PC-3 (cell line): ENCODE measurements at regions of chr7 and their contacts with region 1.

Region 1: GRCh38 chr7:100803398-100804233 is 23.7 kb downstream of the EPHB4 start:
- DNase-seq: peak; percentile 87
- ATAC-seq: peak; percentile 57
- H3K4me3 ChIP-seq: peak overlapping the region; percentile 34; the same call in 1 of the 2 replicates
- H3K27ac ChIP-seq: peak overlapping the region; percentile 96
- H3K4me1 ChIP-seq: peaks cover 46% of the 10 kb centered on the region
- H3K27me3 ChIP-seq: no peaks in the 10 kb centered on the region
- CTCF ChIP-seq: no peak

Region 2: GRCh38 chr7:100726996-100727761 is 76.4 kb before region 1 on chr7:
- CTCF ChIA-PET with region 1: interaction called, 5 read pairs
- POLR2A ChIA-PET with region 1: no interaction called
- intact Hi-C with region 1: loop called (anchors 2 kb)
- DNase-seq: peak; percentile 41
- ATAC-seq: 0 out of 2 replicates have a peak, but pooled peaks have one; percentile 14
- H3K4me3 ChIP-seq: no peak overlapping the region
- H3K27ac ChIP-seq: no peak overlapping the region
- H3K4me1 ChIP-seq: peaks cover 13% of the 10 kb centered on the region
- H3K27me3 ChIP-seq: no peaks in the 10 kb centered on the region
- CTCF ChIP-seq: no peak

Region 3: DNA sequence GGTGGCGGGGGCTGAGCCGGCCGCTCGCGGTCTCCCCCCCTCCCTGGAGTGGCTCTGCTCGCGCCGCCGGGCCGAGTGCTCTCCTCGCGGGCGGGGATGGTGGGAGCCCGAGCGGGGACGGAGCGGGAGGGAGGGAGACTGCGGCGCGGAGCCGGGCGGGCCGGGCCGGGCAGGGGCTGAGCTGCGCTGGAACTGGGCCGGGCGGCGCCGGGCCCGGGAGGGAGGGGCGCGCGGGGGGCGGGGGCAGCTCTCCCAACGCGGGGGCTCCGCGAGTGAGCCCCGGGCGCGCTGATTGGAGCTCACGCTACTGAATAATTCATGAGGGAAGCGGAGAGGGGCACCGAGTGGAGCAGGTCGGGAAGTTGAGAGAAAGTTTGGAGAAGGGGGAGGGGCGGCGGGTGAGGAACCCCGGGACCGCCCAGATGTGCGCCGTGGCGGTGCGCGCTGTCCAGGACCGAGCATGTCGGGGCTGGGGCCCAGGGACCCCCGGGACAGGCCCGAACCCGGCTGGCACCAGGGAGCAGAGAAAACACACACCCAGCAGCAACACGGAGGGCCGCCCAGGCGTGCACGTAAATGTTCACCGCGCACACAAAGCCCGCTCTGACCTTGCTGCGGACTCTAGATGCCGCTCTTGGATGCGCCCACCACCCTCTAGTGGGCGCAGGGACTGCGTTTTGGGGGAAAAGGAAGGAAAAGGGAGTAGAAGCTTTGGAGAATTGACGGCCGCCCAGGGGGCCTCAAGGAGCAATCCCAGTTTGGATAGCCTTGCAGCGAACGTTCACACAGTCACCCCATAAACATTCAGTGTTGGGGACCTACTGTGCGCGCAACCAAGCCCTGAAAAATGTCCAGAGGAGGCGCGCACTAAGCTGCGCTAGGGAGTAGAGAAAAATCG is 24.0 kb after region 1 on chr7 and contains the start of gene EPHB4:
- CTCF ChIA-PET with region 1: interaction called, 27 read pairs
- POLR2A ChIA-PET with region 1: interaction called, 12 read pairs
- intact Hi-C with region 1: loop called (anchors 1 kb)
- DNase-seq: peak; percentile 84
- ATAC-seq: peak; percentile 79
- H3K4me3 ChIP-seq: peak within 1 kb of the TSS; percentile 99
- H3K27ac ChIP-seq: peak within 1 kb of the TSS; percentile 5; the same call in 1 of the 2 replicates
- H3K4me1 ChIP-seq: peaks cover 5% of the 10 kb centered on the region; the same call in 1 of the 2 replicates
- H3K27me3 ChIP-seq: no peaks in the 10 kb centered on the region
- CTCF ChIP-seq: peak; percentile 62
- total RNA-seq, gene EPHB4: 104 and 150 TPM in 2 replicates

Region 4: GRCh38 chr7:100867040-100867775 is 63.6 kb after region 1 on chr7 and contains the start of gene TRIP6:
- CTCF ChIA-PET with region 1: no interaction called
- POLR2A ChIA-PET with region 1: no interaction called
- intact Hi-C with region 1: loop called (anchors 5 kb)
- DNase-seq: peak; percentile 74
- ATAC-seq: peak; percentile 5
- H3K4me3 ChIP-seq: peak within 1 kb of the TSS; percentile 31
- H3K27ac ChIP-seq: peak within 1 kb of the TSS; percentile 100
- H3K4me1 ChIP-seq: peaks cover 34% of the 10 kb centered on the region
- H3K27me3 ChIP-seq: no peaks in the 10 kb centered on the region
- CTCF ChIP-seq: no peak
- total RNA-seq, gene TRIP6: 11.3 and 14.6 TPM in 2 replicates

Region 5: DNA sequence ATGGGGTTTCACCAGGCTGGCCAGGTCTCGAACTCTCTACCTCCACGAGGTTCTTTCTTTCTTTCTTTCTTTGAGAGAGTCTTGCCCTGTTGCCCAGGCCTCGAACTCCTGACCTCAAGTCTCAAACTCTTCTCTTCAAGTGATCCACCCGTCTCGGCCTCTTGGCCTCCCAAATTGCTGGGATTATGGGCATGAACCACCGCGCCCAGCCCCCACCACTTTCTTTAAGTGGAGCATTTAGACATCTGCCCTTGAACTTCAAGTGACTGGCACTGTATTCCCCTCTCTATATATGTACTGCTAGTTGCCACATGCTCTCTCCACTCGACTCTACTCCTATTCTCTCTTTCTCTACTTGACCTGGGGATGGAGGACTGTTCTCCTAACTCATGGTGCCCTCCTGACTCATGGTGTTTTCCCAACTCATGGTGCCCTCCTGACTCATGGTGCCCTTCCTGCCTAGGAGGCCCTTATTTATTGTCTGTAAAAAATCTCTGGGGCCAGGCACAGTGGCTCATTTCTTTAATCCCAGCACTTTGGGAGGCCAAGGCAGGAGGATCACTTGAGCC is 111.3 kb after region 1 on chr7:
- CTCF ChIA-PET with region 1: no interaction called
- POLR2A ChIA-PET with region 1: no interaction called
- intact Hi-C with region 1: no loop called
- DNase-seq: peak; percentile 58
- ATAC-seq: peak; percentile 35; the same call in 1 of the 2 replicates
- H3K4me3 ChIP-seq: no peak overlapping the region
- H3K27ac ChIP-seq: no peak overlapping the region
- H3K4me1 ChIP-seq: no peaks in the 10 kb centered on the region
- H3K27me3 ChIP-seq: no peaks in the 10 kb centered on the region
- CTCF ChIP-seq: no peak